ENCODE measurements at regions of chr11 and their contacts with region 1.

Region 1: DNA sequence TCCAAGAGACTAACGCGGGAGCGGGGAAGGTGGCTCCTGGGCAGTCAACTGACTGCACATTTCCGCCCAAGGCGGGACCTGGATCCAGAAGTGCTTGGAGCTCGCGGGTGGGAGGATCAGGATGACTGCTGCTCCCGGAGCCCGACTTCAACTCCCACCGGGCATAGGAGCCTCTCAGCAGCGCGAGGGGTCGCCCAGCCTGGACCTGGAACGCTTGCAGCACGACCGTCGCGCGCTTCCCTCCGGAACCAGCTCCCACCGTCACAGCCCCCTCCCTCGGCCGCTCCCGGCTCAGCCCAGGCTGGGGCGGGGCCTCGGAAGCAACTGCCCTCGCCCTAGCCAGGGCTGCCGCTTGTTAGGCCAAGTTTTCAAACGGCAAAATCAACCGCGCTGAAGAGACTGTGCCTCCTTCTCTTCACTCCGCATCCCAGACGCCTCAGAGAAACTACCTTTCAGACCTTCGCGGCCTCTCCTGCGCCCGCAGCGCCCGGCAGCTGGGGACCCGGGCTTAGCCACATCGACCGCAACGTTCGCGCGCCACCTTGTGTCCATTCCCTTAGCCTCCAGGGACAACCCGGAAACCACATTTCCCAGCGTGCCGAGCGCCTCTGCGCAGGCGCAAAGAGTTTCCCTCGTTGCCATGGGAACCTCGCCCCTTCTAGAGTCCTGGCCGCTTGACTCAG is 14.0 kb downstream of the SSH3 start:
- DNase-seq: peak; percentile 95 to 98 (median 96)
- H3K4me3 ChIP-seq: peak overlapping the region; percentile 53 to 91 (median 86)
- H3K27ac ChIP-seq: peak overlapping the region; percentile 25 to 80
- H3K4me1 ChIP-seq: peaks cover 9 to 30% (median 24%) of the 10 kb centered on the region in 4 experiments
- H3K27me3 ChIP-seq: no peaks in the 10 kb centered on the region

Region 2: GRCh38 chr11:67239783-67240575 is 77.4 kb before region 1 on chr11:
- CTCF ChIA-PET with region 1: no interaction called
- POLR2A ChIA-PET with region 1: interaction called, 10 read pairs
- DNase-seq: peak; percentile 99 to 100 (median 99)
- H3K4me3 ChIP-seq: peak overlapping the region; percentile 42 to 99 (median 97)
- H3K27ac ChIP-seq: peak overlapping the region; percentile 99
- H3K4me1 ChIP-seq: peaks cover 14 to 43% (median 39%) of the 10 kb centered on the region in 4 experiments
- H3K27me3 ChIP-seq: no peaks in the 10 kb centered on the region

Region 3: DNA sequence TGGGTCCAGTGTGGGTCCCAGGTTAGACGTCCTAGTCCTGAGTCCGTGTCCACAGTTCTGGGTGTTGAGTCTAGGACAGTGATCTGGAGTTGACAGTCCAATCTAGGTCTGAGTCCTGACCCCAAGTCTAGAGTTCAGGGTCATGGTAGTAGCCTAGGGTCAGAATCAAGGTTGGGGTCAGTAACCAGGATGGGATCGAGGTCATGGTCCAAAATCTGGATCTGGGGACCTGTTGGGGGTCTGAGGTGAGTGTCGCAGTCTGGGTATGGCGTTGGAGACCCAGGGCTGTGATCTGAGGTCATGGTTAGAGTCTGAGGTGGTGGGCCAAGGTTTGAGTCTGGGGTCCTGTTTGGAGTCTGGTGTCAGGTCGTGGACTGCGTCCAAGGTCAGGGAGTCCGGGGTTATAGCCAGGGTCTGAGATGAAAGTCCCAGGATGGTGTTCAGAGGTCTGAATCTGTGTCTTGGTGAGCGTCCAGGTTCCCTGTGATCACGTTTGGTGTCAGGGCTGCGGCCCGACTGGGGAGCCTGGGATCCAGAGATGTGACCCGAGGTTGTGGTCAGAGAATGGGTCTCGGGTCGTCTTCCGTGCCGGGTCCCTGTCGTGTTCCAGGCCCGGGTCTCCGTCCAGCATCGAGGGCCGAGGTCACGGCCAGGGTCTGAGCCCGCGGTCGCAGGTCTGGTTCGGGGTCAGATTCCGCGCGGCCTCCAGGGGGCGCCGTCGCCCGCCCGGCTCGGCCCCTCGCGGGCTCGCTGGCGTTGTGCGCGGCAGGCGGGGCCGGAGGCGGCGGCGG is 51.5 kb before region 1 on chr11:
- CTCF ChIA-PET with region 1: interaction called, 124 read pairs
- POLR2A ChIA-PET with region 1: interaction called, 26 read pairs
- DNase-seq: peak; percentile 63 to 75 (median 74)
- H3K4me3 ChIP-seq: peak overlapping the region in 3 of 7 experiments; percentile 11 to 98 (median 17)
- H3K27ac ChIP-seq: no peak overlapping the region
- H3K4me1 ChIP-seq: peaks cover 6 to 75% (median 73%) of the 10 kb centered on the region in 4 experiments
- H3K27me3 ChIP-seq: no peaks in the 10 kb centered on the region

Region 4: GRCh38 chr11:67288452-67289225 is 28.7 kb before region 1 on chr11:
- CTCF ChIA-PET with region 1: interaction called, 15 read pairs
- POLR2A ChIA-PET with region 1: interaction called, 22 read pairs
- DNase-seq: peak; percentile 95 to 97 (median 97)
- H3K4me3 ChIP-seq: peak overlapping the region; percentile 48 to 81 (median 64)
- H3K27ac ChIP-seq: peak overlapping the region; percentile 90 to 97
- H3K4me1 ChIP-seq: peaks cover 0 to 78% (median 68%) of the 10 kb centered on the region in 4 experiments
- H3K27me3 ChIP-seq: no peaks in the 10 kb centered on the region

Region 5: DNA sequence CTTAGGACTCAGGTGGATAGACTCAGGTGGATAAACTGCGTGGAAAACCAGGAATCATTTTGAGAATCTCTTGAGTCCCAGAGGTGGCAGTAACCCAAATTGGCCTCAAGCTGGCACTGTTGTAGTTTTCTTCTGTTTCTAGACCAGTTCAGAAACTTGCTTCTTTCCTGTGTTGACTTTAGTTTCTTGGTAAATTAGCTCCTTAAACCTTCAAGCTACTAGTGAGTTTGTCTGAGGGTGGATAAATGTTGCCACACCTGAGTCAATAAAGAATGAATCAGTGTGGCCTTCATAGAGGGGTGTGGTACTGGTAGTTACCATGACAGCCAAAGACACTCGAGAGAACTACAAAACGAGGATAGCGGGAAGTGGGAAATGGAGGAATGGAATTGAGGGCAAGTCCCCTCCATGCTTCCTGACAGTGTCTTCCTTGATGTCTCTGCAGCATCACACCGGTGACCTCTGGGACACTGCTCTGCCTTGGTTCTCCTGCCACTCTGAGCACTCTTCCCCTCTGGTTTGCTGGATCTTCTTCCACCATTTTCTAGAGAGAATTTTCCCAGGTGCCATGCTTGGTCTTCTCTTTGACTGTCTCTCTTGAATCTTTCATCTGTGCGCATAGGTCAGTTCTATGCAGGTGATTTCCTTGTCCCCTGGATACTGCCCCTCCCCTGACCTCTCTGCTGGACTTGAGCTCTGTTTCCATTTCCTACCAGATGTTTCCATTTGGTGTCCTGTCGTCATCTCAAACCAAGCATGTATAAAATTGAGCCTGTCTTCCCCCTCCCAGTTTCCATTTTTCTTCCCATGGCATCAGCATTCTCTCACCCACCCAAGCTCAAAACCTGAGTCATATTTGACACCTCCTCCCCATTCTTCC is 28.8 kb after region 1 on chr11:
- CTCF ChIA-PET with region 1: interaction called, 15 read pairs
- POLR2A ChIA-PET with region 1: no interaction called
- DNase-seq: peak in 2 of 3 donors; percentile 49 to 54
- H3K4me3 ChIP-seq: no peak overlapping the region
- H3K27ac ChIP-seq: no peak overlapping the region
- H3K4me1 ChIP-seq: peaks cover 0 to 33% (median 14%) of the 10 kb centered on the region in 4 experiments
- H3K27me3 ChIP-seq: no peaks in the 10 kb centered on the region